ENCODE measurements at regions of chr20 and their contacts with region 1.

Region 1: GRCh38 chr20:24160563-24161375 is 172.2 kb upstream of the GGTLC1 start:
- DNase-seq: peak in 2 of 3 donors; percentile 45 to 59
- ATAC-seq: peak; percentile 84 to 88 (median 88)
- H3K4me3 ChIP-seq: no peak overlapping the region
- H3K27ac ChIP-seq: no peak overlapping the region
- H3K4me1 ChIP-seq: no peaks in the 10 kb centered on the region
- H3K27me3 ChIP-seq: no peaks in the 10 kb centered on the region
- CTCF ChIP-seq: peak; percentile 51 to 88 (median 76)
- POLR2A ChIP-seq: no peak

Region 2: GRCh38 chr20:24392612-24393011 is 231.8 kb after region 1 on chr20:
- intact Hi-C with region 1: no loop called
- DNase-seq: no peak
- ATAC-seq: no peak
- H3K4me3 ChIP-seq: no peak overlapping the region
- H3K27ac ChIP-seq: no peak overlapping the region
- H3K4me1 ChIP-seq: no peaks in the 10 kb centered on the region
- H3K27me3 ChIP-seq: no peaks in the 10 kb centered on the region
- CTCF ChIP-seq: no peak
- POLR2A ChIP-seq: no peak

Region 3: GRCh38 chr20:24781422-24781980 is 620.7 kb after region 1 on chr20:
- intact Hi-C with region 1: loop called in 1 of 2 experiments (anchors 5 kb)
- DNase-seq: peak in 2 of 3 donors; percentile 34 to 51
- ATAC-seq: peak; percentile 63 to 76 (median 66)
- H3K4me3 ChIP-seq: no peak overlapping the region
- H3K27ac ChIP-seq: no peak overlapping the region
- H3K4me1 ChIP-seq: no peaks in the 10 kb centered on the region
- H3K27me3 ChIP-seq: no peaks in the 10 kb centered on the region
- CTCF ChIP-seq: peak; percentile 46 to 70 (median 48)
- POLR2A ChIP-seq: no peak

Region 4: GRCh38 chr20:24917797-24918578 is 757.2 kb after region 1 on chr20:
- intact Hi-C with region 1: loop called in 1 of 2 experiments (anchors 10 kb)
- DNase-seq: peak in 1 of 3 donors; percentile 60
- ATAC-seq: peak; percentile 75 to 90 (median 86)
- H3K4me3 ChIP-seq: no peak overlapping the region
- H3K27ac ChIP-seq: no peak overlapping the region
- H3K4me1 ChIP-seq: no peaks in the 10 kb centered on the region
- H3K27me3 ChIP-seq: no peaks in the 10 kb centered on the region
- CTCF ChIP-seq: peak; percentile 70 to 86 (median 76)
- POLR2A ChIP-seq: no peak